Activated CD4-positive, alpha-beta T cell treated with anti-CD3 and anti-CD28 coated beads for 36 hours (primary cell): ENCODE measurements at regions of chr1 and their contacts with region 1.

Region 1: GRCh38 chr1:181390410-181391077 is 92.8 kb upstream of the CACNA1E start:
- DNase-seq: no peak
- ATAC-seq: no peak
- H3K4me3 Mint-ChIP-seq: no peak overlapping the region
- H3K27ac Mint-ChIP-seq: no peak overlapping the region
- H3K4me1 Mint-ChIP-seq: peaks cover 9% of the 10 kb centered on the region
- H3K27me3 Mint-ChIP-seq: no peaks in the 10 kb centered on the region

Region 2: GRCh38 chr1:181099152-181100014 is 291.2 kb before region 1 on chr1:
- CTCF ChIA-PET with region 1: no interaction called
- POLR2A ChIA-PET with region 1: no interaction called
- intact Hi-C with region 1: loop called in 1 of 2 experiments (anchors 5 kb)
- DNase-seq: peak; percentile 73
- ATAC-seq: peak; percentile 87
- H3K4me3 Mint-ChIP-seq: peak overlapping the region; percentile 56
- H3K27ac Mint-ChIP-seq: peak overlapping the region; percentile 94
- H3K4me1 Mint-ChIP-seq: peaks cover 77% of the 10 kb centered on the region
- H3K27me3 Mint-ChIP-seq: no peaks in the 10 kb centered on the region

Region 3: DNA sequence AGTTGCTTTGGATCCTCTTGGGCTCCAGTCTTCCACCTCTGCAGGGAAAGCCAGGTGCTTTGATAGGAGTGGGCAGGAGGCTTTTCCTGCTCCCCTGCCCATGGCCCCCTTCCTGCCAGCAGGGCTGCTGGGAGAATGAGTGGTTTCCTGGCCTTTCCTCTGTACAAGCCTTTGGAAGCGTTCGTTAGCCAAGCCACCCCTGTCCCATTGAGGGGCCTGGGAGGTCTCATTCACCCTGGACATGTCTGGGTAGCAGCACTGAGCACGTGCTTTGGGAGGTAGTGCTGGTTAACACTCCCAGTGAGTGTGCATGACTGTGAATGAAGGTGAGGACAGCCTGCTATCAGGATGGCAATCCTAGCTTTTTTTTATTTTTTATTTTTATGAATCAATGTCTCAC is 25.7 kb before region 1 on chr1:
- CTCF ChIA-PET with region 1: no interaction called
- POLR2A ChIA-PET with region 1: no interaction called
- intact Hi-C with region 1: no loop called
- DNase-seq: no peak
- ATAC-seq: no peak
- H3K4me3 Mint-ChIP-seq: no peak overlapping the region
- H3K27ac Mint-ChIP-seq: no peak overlapping the region
- H3K4me1 Mint-ChIP-seq: no peaks in the 10 kb centered on the region
- H3K27me3 Mint-ChIP-seq: no peaks in the 10 kb centered on the region